BJ (cell line): ENCODE measurements at regions of chr12 and their contacts with region 1.

Region 1: DNA sequence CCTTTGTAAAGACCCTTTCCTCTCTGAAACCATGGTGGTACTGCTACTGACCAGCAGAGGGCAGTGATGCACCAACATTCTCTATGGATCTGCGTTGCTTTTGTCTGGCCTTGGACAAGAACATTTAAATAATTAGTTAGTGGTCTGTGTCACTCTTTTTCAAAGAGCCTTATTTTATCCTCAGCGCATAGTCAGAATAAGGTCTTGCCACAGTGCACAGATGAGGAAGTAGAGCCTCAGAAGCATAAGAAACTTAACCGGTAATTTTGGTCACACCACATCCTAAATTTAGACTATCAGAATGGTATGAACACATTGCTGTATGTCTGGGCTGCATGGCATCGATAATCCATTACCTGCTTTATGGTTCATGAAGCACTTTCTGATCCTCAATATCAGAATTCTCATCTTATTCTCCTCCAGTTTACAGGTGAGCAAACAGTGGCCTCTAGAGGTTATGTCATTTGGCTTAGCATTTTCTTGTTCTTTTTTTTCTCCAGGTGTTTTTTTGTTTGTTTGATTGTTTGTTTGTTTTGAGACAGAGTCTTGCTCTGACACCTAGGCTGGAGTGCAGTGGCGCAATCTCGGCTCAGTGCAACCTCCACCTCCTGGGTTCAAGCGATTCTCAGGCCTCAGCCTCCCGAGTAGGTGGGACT is 23.7 kb upstream of the IFT81 start:
- DNase-seq: no peak
- H3K4me3 ChIP-seq: no peak overlapping the region
- H3K27me3 ChIP-seq: no peaks in the 10 kb centered on the region
- CTCF ChIP-seq: peak; percentile 85

Region 2: DNA sequence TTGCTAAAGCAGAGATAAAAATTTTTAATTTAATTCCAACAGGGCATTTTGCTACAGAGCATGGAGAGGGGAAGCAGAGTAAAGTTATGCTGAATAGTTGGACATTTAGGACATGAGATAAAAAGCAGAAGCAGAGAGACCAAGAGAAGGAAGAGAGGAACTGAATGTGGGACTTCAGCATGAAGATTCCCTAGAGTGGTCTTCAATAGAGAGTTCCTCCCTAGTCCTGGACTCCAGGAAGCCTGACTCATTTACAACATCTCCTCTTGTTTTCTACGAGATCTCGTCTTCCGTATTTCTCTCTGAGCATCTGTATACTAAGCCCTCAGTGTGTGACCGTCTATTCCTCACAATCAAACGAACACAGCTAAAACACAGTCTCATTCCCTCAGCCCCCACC is 11.5 kb before region 1 on chr12:
- CTCF ChIA-PET with region 1: interaction called, 10 read pairs
- POLR2A ChIA-PET with region 1: no interaction called
- DNase-seq: no peak
- H3K4me3 ChIP-seq: no peak overlapping the region
- H3K27me3 ChIP-seq: peaks cover 3% of the 10 kb centered on the region; the same call in 1 of the 2 replicates
- CTCF ChIP-seq: no peak

Region 3: DNA sequence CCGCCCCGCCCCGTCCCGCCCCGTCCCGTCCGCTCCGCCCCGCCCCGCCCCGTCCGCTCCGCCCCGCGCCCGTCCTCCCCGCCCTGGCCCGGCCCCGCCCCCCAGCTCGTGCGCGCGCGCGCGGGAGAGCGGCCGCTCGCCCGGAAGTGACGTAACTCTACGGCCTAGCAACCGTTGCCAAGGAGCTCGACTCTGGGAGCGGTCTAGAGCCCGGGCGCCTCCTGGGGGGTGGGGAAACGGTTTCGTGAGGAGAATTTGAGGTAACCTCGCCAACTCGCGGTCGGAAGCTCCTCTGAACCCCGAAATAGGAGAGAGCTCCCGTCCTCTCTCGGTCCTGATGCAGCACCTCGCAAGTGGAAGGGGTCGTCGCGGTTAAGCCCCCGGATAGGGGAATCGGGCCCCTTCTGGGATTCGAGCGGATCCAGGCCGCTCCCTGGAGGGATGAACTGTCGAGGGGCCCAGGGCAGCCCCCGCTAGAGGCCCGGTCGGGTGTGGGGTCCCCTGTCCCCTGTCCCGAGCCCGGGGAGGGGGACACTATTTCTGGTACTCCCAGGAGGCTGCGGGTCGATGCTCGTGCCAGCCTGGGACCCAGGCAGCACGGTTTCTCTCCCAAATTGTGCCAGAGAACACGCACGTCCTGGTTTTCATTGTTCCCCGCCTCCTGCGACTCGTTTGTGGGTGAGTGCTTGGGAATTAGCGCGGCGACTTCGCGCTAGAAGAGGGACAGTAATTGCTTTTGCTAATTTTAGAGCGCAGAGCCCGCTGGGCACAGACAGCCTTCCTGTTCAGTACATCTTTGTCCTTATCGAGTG is 23.9 kb after region 1 on chr12 and contains the start of gene IFT81:
- CTCF ChIA-PET with region 1: no interaction called
- POLR2A ChIA-PET with region 1: no interaction called
- DNase-seq: no peak
- H3K4me3 ChIP-seq: peak within 1 kb of the TSS; percentile 86
- H3K27me3 ChIP-seq: no peaks in the 10 kb centered on the region
- CTCF ChIP-seq: no peak
- polyA plus RNA-seq, gene IFT81: 6.6 and 12.0 TPM in 2 replicates

Region 4: DNA sequence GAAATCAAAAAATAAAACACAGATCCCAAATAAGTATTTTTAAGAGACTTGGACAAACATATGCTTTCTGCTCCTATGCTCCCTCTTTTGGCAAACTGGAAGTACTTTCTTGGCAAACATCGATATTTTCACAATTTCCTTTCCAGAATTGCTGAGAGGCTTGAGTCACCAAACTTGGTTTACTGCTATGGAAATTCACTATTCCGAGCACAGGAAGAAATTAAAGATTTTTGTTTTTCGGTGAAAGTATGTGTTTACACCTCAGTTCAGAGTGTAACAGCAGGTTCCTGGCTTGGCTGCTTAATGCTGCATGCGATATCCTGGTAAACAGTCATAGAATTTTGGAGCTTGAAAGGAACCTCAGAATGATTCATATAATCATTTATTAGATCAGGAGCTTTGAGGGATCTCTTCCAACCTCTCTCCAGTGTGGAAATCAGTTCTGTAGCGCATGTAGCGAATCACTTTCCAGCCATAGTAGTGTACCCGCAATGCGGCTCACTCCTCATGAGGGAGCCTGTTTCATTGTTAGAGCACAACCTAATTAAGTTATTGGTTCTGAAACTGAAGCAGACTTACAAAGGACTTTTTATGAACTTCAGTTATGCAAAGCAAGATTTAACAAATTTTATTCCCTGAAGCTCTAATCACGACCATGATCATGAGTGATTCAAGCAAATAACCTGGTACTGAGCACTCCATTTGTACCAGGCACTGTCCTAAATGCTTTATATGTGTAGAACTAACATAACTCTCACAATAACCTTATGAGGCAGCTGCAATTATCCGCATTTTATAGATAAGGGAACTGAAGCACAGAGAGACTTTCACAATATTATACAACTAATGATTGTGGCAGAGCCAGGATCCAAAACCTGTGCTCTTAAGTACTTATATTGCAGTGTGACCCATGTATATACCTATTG is 124.2 kb after region 1 on chr12:
- CTCF ChIA-PET with region 1: interaction called, 14 read pairs
- POLR2A ChIA-PET with region 1: interaction called, 4 read pairs
- DNase-seq: peak; percentile 74
- H3K4me3 ChIP-seq: peak overlapping the region; percentile 14
- H3K27me3 ChIP-seq: no peaks in the 10 kb centered on the region
- CTCF ChIP-seq: peak; percentile 73

Region 5: DNA sequence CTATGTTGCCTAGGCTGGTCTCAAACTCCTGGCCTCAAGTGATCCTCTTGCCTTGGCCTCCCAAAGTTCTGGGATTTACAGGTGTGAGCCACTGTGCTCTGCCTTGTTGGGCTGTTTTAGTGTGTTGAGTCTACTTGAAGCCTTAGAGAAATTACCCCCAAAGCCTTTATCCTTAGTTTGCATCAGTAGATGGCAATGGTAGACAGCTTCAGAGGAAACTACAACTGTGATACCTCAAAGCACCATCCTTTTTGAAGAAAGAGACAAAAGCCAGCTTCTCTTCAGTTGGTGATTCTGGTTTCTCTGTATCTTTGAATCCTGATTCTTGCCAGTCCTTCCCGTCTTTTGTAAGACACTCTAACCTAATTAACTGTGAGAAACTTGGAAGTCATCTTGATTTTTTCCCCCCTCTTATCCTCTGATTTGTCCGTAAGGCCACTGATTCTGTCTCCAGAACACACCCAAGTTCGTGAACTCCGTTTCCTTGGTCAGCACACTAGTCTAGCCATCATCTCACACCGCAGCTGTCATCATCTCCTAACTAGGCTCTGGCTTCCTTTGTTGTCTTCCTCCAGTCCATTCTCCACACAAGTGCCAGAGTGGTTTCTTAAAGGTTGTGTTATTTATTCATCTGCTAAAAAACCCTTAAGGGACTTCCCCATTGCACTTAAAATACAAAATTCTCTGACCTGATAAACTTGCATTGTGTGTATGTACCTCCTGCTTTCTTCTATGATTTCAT is 200.8 kb after region 1 on chr12:
- CTCF ChIA-PET with region 1: interaction called, 10 read pairs
- POLR2A ChIA-PET with region 1: no interaction called
- DNase-seq: no peak
- H3K4me3 ChIP-seq: no peak overlapping the region
- H3K27me3 ChIP-seq: no peaks in the 10 kb centered on the region
- CTCF ChIP-seq: no peak